ENCODE measurements at regions of chr9 and their contacts with region 1.

Region 1: DNA sequence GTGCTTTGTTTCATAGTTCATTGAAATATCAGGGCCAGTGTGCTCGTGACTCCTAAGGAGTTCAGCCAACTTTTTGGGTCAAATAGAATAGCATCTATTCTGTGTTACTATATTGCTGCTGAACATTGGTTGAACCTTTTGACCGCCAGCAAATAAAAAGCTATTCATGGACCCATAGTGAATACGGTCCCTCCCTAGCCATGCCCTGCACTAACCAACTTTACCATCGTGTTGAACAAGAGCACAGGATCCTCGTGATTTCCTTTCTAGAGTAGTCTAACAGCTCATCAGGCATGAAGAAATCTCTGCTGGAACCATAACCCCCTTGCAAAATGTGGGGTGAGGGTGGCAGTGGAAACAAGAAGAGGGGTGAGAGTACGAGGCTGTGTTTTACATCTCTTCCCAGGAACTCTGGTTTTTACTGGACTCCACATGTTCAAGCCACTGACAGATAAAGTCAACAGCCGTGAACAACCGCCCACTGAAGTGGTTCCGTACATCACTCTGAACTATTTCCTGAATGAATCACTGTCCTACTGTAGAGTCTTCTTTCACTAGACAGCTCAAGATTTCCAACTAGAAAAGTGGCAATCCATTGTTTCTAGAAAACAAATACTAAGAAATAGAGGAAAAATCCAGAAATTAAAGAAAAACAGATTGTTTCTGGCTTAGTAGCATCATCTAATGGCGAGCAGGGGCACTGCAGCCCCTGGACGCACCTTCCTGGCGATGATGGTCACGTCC is 70.1 kb upstream of the SPATA31E1 start:
- DNase-seq: no peak
- H3K4me3 ChIP-seq: no peak overlapping the region
- H3K27ac ChIP-seq: no peak overlapping the region
- H3K4me1 ChIP-seq: peaks cover 0 to 8% (median 0%) of the 10 kb centered on the region in 4 donors
- H3K27me3 ChIP-seq: no peaks in the 10 kb centered on the region
- CTCF ChIP-seq: peak; percentile 27 to 64 (median 62)
- EP300 ChIP-seq: no peak
- POLR2A ChIP-seq: no peak

Region 2: GRCh38 chr9:87678650-87679515 is 133.7 kb before region 1 on chr9:
- intact Hi-C with region 1: loop called (anchors 2 kb)
- DNase-seq: peak; percentile 81
- H3K4me3 ChIP-seq: no peak overlapping the region
- H3K27ac ChIP-seq: no peak overlapping the region
- H3K4me1 ChIP-seq: peaks cover 0 to 27% (median 15%) of the 10 kb centered on the region in 4 donors
- H3K27me3 ChIP-seq: no peaks in the 10 kb centered on the region
- CTCF ChIP-seq: peak; percentile 52 to 78 (median 70)
- EP300 ChIP-seq: no peak
- POLR2A ChIP-seq: no peak

Region 3: GRCh38 chr9:87850391-87850790 is 37.8 kb after region 1 on chr9:
- intact Hi-C with region 1: no loop called
- DNase-seq: no peak
- H3K4me3 ChIP-seq: no peak overlapping the region
- H3K27ac ChIP-seq: no peak overlapping the region
- H3K4me1 ChIP-seq: no peaks in the 10 kb centered on the region
- H3K27me3 ChIP-seq: no peaks in the 10 kb centered on the region
- CTCF ChIP-seq: no peak
- EP300 ChIP-seq: no peak
- POLR2A ChIP-seq: no peak

Region 4: DNA sequence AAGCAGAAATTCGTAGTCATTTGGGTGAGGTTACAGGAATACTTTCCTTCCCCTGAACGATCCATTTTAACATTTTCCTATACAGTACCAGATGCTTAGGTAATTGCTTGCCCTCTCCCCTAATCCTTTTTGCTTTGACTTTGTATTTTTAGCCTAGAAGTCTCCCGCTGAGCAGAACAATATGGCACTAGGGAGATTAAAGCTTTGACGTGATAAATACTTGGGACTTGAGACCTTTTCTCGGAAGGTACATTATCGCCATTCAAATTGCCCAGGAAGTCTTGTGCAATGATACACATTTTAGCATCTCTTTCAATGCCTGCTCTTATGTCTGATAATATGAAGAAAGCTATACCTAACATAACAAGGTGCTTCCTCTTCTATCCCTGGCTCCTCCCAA is 348.6 kb after region 1 on chr9:
- intact Hi-C with region 1: no loop called
- DNase-seq: no peak
- H3K4me3 ChIP-seq: no peak overlapping the region
- H3K27ac ChIP-seq: no peak overlapping the region
- H3K4me1 ChIP-seq: no peaks in the 10 kb centered on the region
- H3K27me3 ChIP-seq: no peaks in the 10 kb centered on the region
- CTCF ChIP-seq: no peak
- EP300 ChIP-seq: no peak
- POLR2A ChIP-seq: no peak

Measured in sigmoid colon (tissue), 7 donors.